Left ventricle myocardium inferior (tissue), 1 donor: ENCODE measurements at regions of chr1 and their contacts with region 1.

Region 1: GRCh38 chr1:39609618-39610331 is 29.7 kb downstream of the HEYL start:
- DNase-seq: peak; percentile 82
- H3K4me3 ChIP-seq: peak overlapping the region; percentile 37
- H3K27ac ChIP-seq: peak overlapping the region; percentile 63
- H3K4me1 ChIP-seq: peaks cover 11% of the 10 kb centered on the region
- H3K27me3 ChIP-seq: peaks cover 14% of the 10 kb centered on the region
- CTCF ChIP-seq: peak; percentile 79

Region 2: GRCh38 chr1:39653546-39654031 is 43.8 kb after region 1 on chr1:
- intact Hi-C with region 1: loop called (anchors 2 kb)
- DNase-seq: peak; percentile 80
- H3K4me3 ChIP-seq: no peak overlapping the region
- H3K27ac ChIP-seq: peak overlapping the region; percentile 79
- H3K4me1 ChIP-seq: peaks cover 64% of the 10 kb centered on the region
- H3K27me3 ChIP-seq: no peaks in the 10 kb centered on the region
- CTCF ChIP-seq: peak; percentile 92

Region 3: DNA sequence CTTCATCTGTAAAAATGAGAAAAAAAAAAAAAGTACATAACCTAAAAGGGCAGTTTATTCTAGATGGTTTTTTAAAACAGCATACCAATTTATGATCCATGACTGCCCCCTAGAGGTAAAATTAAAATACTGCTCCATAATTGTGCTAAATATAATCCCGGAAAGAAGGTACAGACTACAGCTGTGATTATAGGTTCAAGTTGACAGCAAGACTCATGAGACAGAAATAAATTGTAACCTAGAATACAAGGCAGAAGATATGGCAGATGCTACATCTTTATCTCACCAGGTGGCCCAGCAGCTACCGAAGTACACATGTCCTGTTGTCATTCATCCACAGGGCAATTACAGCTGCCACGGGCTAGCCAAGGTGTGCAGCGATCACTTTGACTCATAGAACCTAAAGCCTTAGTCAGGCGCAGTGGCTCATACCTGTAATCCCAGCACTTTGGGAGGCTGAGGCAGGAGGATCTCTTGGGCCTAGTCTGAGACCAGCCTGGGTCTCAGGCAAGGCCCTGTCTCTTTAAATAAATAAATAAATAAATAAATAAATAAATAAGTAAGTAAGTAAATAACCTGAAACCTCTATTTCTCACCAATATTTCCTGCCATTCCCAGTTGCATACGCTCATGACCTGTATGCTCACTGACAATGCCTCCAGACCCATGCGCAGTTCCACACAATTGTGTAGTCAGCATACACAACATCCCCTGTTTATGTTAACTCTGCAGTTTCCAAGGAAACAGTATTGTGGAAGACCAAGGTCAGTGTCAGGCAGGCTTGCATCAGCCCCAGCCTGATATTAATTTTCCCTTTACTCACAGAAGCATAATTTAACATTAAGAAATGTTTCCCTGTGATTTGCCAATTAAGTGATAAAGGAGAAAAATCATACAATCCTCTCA is 110.6 kb after region 1 on chr1:
- intact Hi-C with region 1: loop called (anchors 5 kb)
- DNase-seq: no peak
- H3K4me3 ChIP-seq: no peak overlapping the region
- H3K27ac ChIP-seq: no peak overlapping the region
- H3K4me1 ChIP-seq: peaks cover 4% of the 10 kb centered on the region
- H3K27me3 ChIP-seq: peaks cover 45% of the 10 kb centered on the region
- CTCF ChIP-seq: peak; percentile 80